Prostate gland (tissue), 2 donors: ENCODE measurements at regions of chr5 and their contacts with region 1.

Region 1: DNA sequence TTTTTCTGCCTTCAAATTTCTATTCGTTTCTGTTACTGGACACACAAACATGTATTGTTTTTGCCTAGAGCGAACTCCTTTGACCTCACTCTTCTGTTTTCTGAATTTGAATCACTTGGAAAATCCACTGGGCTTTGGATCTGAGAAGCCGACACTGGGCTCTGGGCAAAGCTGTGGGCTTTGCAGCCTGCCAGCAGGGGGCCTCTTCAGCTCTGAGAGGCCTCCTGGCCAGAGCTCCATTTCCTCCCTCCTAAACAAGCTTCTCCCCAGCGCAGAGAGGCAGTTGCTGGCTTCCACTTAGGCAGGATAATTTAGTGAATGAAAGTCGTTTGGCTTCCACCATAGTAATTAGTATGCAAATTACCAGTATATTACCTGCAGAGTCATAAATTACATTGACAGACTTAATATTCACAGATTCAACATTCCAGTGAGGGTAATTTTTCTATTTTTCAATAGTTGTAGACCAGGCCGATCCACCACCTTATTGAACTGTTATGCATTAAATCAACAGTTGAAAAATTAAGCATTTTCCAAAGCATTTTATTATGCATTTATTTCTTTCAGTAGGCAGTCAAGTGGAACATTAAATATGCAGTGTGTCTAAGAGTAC is 104.0 kb upstream of the ZNF366 start:
- DNase-seq: peak; percentile 62
- H3K4me3 ChIP-seq: no peak overlapping the region
- H3K27ac ChIP-seq: no peak overlapping the region
- H3K4me1 ChIP-seq: no peaks in the 10 kb centered on the region
- H3K27me3 ChIP-seq: no peaks in the 10 kb centered on the region
- CTCF ChIP-seq: peak; percentile 54 to 78 (median 76)
- POLR2A ChIP-seq: no peak

Region 2: DNA sequence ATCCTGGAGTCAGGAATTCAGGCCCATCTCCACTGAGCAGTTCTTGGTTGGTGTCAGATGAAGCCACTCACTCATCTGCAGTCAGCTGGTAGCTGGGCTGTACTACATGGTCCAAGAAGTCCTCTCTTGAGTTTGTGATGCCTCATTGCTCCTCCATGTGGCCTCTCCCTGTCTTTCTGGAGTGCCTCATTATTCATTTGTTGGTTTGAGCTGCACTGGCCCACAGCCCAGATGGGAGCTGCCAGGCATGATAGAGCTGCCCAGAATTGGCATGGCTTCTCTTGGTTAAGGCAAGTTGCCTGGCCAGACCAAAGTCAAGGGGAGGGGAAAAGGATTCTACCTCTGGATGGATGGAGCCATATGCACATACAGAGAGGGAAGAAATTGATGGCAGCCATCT is 283.1 kb before region 1 on chr5:
- intact Hi-C with region 1: no loop called
- DNase-seq: peak; percentile 14
- H3K4me3 ChIP-seq: no peak overlapping the region
- H3K27ac ChIP-seq: no peak overlapping the region
- H3K4me1 ChIP-seq: no peaks in the 10 kb centered on the region
- H3K27me3 ChIP-seq: no peaks in the 10 kb centered on the region
- CTCF ChIP-seq: no peak
- POLR2A ChIP-seq: no peak

Region 3: GRCh38 chr5:72788866-72789505 is 177.8 kb after region 1 on chr5:
- intact Hi-C with region 1: no loop called
- DNase-seq: no peak
- H3K4me3 ChIP-seq: no peak overlapping the region
- H3K27ac ChIP-seq: no peak overlapping the region
- H3K4me1 ChIP-seq: no peaks in the 10 kb centered on the region
- H3K27me3 ChIP-seq: no peaks in the 10 kb centered on the region
- CTCF ChIP-seq: no peak
- POLR2A ChIP-seq: no peak

Region 4: GRCh38 chr5:72816311-72817145 is 205.3 kb after region 1 on chr5 and contains the start of gene TNPO1:
- intact Hi-C with region 1: loop called (anchors 5 kb)
- DNase-seq: peak; percentile 93
- H3K4me3 ChIP-seq: peak within 1 kb of the TSS; percentile 70 to 79
- H3K27ac ChIP-seq: peak within 1 kb of the TSS; percentile 94 to 96
- H3K4me1 ChIP-seq: no peaks in the 10 kb centered on the region
- H3K27me3 ChIP-seq: no peaks in the 10 kb centered on the region
- CTCF ChIP-seq: peak in 2 of 4 experiments; percentile 10 to 17
- POLR2A ChIP-seq: peak; percentile 99
- total RNA-seq, gene TNPO1: 107 to 113 TPM

Region 5: GRCh38 chr5:72871366-72872024 is 260.3 kb after region 1 on chr5:
- intact Hi-C with region 1: no loop called
- DNase-seq: no peak
- H3K4me3 ChIP-seq: no peak overlapping the region
- H3K27ac ChIP-seq: no peak overlapping the region
- H3K4me1 ChIP-seq: no peaks in the 10 kb centered on the region
- H3K27me3 ChIP-seq: no peaks in the 10 kb centered on the region
- CTCF ChIP-seq: no peak
- POLR2A ChIP-seq: no peak